ENCODE measurements at regions of chr2 and their contacts with region 1.

Region 1: DNA sequence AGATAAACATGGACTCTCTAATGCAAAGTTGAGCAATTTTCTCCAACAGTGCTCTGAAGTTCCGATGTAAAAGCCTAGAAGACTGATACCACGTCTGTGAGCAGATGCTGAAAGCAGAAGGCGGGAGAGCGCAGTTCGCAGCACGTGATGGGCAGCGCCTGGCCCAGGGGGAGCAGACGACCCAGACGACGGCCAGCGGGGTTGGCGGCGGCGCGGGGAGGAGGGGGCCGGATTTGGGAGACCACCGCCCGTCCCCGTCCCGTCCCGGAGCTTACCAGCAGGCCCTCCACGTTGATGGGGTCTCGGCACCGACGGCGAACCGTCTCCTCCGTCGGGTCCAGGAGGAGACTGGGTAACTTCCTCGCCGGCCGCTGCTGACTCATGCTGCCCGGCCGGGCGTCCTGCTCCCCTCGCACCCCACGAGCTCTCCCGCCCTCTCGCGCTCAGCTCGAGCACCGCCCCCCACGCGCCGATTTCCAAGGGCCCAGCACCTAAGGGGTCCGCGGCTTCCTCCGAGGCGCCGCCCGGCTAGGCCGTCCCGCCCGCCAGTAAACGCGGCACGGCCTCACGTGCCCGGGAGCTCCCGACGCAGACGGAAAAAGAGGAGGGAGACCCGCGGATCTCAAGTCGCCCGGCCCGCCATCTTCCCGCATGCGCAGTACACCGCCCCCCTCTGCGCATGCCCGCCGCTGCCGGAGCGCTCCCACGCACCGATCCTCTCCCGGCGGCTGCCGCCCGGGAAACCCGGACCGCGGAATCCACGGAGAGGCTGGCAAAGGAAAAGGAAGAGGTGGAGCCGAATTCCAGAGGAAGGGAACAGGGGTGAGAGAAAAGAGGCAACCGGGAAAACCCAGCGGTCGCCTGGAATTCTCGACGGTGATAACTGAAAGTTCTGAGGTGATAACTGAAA is at the start of gene E2F6:
- DNase-seq: peak; percentile 88
- H3K4me3 Mint-ChIP-seq: peak within 1 kb of the TSS; percentile 93
- H3K27ac Mint-ChIP-seq: peak within 1 kb of the TSS; percentile 89
- H3K4me1 Mint-ChIP-seq: peaks cover 37% of the 10 kb centered on the region
- H3K27me3 Mint-ChIP-seq: peaks cover 8% of the 10 kb centered on the region

Region 2: GRCh38 chr2:11446733-11447248 is 19.0 kb before region 1 on chr2:
- CTCF ChIA-PET with region 1: interaction called, 11 read pairs
- DNase-seq: peak; percentile 62
- H3K4me3 Mint-ChIP-seq: no peak overlapping the region
- H3K27ac Mint-ChIP-seq: no peak overlapping the region
- H3K4me1 Mint-ChIP-seq: no peaks in the 10 kb centered on the region
- H3K27me3 Mint-ChIP-seq: no peaks in the 10 kb centered on the region

Region 3: GRCh38 chr2:11647834-11648600 is 182.3 kb after region 1 on chr2:
- CTCF ChIA-PET with region 1: no interaction called
- DNase-seq: no peak
- H3K4me3 Mint-ChIP-seq: no peak overlapping the region
- H3K27ac Mint-ChIP-seq: no peak overlapping the region
- H3K4me1 Mint-ChIP-seq: no peaks in the 10 kb centered on the region
- H3K27me3 Mint-ChIP-seq: peaks cover 12% of the 10 kb centered on the region

Region 4: GRCh38 chr2:13156916-13157315 is 1691.2 kb after region 1 on chr2:
- CTCF ChIA-PET with region 1: no interaction called
- DNase-seq: no peak
- H3K4me3 Mint-ChIP-seq: no peak overlapping the region
- H3K27ac Mint-ChIP-seq: no peak overlapping the region
- H3K4me1 Mint-ChIP-seq: no peaks in the 10 kb centered on the region
- H3K27me3 Mint-ChIP-seq: no peaks in the 10 kb centered on the region